ENCODE measurements at regions of chr2 and their contacts with region 1.

Region 1: DNA sequence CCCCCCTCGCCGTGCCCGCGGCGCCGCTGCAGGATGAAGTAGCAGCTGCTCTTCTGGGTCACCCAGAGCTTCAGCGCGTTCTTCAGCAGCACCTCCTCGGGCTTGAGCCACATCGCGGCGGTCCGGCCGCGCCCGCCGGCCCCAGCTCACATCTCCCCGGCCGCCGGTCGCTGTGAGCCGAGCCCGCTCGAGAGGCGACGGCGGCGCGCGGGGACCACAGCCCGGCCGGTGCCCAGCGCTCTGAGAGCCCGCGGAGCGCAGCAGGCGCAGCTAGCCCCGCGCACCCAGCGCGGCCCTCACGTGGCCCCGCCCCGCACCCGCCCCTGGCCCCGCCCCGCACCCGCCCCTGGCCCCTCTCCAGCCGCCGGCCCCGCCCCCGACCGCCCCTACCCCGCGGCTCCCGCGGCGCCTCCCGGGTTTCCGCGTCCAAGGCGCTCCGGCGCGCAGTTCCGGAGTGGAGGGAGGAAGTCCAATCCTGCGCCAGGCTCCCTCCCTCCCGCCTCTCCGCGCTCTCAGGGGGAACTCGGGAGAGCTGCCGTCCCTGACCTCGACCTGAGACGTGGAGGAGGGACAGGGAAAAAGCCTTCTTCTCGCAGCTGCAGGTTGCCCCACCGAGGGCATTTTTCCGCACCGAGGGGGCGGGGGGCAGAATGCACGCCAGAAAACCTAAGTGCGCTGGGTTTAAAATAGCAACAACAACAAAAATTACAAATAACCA is at the start of gene TBC1D8:
- DNase-seq: peak; percentile 52 to 94
- H3K4me3 ChIP-seq: peak within 1 kb of the TSS; percentile 73 to 83
- H3K27ac ChIP-seq: peak within 1 kb of the TSS; percentile 79 to 83
- H3K4me1 ChIP-seq: peaks cover 0 to 15% of the 10 kb centered on the region in 2 donors
- H3K27me3 ChIP-seq: no peaks in the 10 kb centered on the region
- CTCF ChIP-seq: no peak
- total RNA-seq, gene TBC1D8: 17.8 TPM

Region 2: DNA sequence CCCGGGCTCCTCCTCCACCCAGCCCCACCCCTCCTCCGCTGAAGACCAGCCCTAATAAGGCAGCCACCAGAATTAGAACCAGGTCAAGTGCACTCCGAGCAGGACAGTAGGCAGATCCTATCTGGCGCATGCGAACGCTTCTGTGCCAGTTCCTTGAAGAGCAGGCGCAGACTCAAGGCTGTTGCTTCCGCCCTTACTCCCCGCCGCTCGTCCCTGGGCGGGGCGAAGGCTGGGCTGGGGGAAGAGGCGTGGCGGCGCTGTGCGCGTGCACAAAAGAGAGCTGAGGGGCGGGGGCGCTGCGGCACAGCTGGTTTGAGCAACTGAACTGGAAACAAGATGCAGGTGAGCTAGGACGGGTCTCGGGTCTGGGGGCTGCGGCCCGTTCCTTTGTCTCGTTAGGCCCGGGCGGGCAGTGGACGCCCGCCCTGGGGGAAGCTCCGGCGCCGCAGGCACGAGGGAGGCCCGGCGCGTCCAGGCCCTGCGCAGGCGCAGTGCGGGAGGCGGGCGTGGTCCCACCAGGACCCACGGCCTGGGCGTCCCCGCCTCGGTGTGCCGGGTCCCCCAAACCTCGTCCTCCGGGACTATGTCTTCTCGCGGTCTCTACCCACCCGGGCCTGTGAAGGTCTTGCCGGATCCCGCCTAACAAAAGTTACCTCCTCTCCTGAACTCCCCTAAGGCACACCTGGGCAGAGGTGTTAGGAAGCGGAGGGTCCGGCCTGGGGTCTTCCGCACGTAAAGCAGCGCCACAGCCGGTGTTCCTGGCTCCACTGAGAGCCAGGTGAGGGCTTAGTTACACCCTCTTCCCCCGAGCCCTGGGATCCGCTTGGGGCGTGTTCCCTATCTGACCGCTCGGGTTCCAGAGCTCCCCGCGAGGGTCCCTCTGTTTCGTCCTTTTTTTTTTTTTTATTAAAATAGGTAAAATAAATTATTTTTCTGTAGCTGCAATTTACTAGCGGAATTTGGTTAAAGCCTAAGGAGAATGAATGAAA is 588.3 kb before region 1 on chr2 and contains the start of gene PDCL3:
- intact Hi-C with region 1: loop called (anchors 1 kb)
- DNase-seq: peak; percentile 95 to 99
- H3K4me3 ChIP-seq: peak within 1 kb of the TSS; percentile 79 to 84
- H3K27ac ChIP-seq: peak within 1 kb of the TSS; percentile 79 to 85
- H3K4me1 ChIP-seq: peaks cover 0 to 9% of the 10 kb centered on the region in 2 donors
- H3K27me3 ChIP-seq: no peaks in the 10 kb centered on the region
- CTCF ChIP-seq: peak in 1 of 3 experiments; percentile 23
- total RNA-seq, gene PDCL3: 8.1 TPM

Region 3: GRCh38 chr2:100818606-100819369 is 332.5 kb before region 1 on chr2:
- intact Hi-C with region 1: loop called (anchors 5 kb)
- DNase-seq: peak; percentile 30 to 88
- H3K4me3 ChIP-seq: peak overlapping the region; percentile 91 to 95
- H3K27ac ChIP-seq: peak overlapping the region; percentile 95 to 96
- H3K4me1 ChIP-seq: peaks cover 1 to 11% of the 10 kb centered on the region in 2 donors
- H3K27me3 ChIP-seq: no peaks in the 10 kb centered on the region
- CTCF ChIP-seq: peak in 1 of 3 experiments; percentile 17

Region 4: DNA sequence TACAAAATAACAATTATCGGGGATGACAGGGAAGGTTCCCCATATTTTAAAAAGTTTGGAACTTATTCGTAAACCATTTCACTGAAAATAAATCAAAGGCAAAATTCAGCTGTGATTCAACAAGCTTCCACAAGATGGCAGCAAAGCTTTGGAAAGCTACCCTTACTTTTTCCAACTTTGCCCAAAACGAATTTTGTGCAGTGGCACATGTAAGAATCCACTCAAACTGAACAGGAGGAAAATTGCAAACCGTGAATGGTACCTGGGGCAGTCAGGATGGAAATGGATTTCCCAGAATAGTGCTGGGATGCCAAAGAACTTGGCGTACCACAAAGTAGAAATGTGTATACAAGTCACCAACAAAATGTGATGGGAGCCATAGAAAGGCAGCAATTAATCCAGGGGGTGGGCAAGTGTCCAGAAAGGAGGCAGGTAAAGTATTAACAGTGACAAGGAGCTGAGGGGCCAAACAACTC is 138.6 kb before region 1 on chr2:
- intact Hi-C with region 1: loop called (anchors 1 kb)
- DNase-seq: no peak
- H3K4me3 ChIP-seq: no peak overlapping the region
- H3K27ac ChIP-seq: no peak overlapping the region
- H3K4me1 ChIP-seq: no peaks in the 10 kb centered on the region
- H3K27me3 ChIP-seq: no peaks in the 10 kb centered on the region
- CTCF ChIP-seq: peak; percentile 78 to 86 (median 83)

Region 5: DNA sequence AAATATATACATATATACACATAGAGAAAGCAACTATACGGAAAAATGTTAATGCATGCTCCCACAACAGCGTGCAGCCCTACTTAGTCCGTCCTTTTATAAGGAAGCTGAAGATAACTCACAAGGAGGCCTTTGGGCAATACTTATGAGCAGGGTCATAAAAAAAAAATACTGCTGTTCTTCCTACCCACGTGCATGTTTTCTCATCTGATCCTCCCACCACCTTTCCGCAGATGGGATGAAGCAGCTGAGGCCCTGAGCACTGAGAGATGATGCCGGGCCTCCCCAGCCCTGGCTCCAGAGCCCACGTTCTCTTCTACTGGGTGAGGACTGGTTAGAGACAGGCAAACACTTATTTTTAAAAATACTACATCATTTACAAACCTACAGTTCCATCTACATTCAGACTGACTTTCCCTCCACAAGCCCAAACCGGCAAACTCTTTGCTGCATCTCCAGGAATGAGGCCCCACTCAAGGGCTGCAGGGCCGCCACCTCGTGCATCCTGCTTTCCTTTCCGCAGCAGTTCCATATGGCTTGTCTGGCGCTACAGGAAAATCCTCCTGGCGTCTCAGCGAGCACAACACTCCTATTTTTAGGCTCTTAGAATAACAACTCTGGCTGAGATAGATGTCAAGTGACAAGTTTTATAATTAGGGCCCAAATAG is 41.7 kb before region 1 on chr2:
- intact Hi-C with region 1: no loop called
- DNase-seq: no peak
- H3K4me3 ChIP-seq: no peak overlapping the region
- H3K27ac ChIP-seq: peak overlapping the region; percentile 17 to 24
- H3K4me1 ChIP-seq: peaks cover 0 to 13% of the 10 kb centered on the region in 2 donors
- H3K27me3 ChIP-seq: no peaks in the 10 kb centered on the region
- CTCF ChIP-seq: no peak

Region 6: DNA sequence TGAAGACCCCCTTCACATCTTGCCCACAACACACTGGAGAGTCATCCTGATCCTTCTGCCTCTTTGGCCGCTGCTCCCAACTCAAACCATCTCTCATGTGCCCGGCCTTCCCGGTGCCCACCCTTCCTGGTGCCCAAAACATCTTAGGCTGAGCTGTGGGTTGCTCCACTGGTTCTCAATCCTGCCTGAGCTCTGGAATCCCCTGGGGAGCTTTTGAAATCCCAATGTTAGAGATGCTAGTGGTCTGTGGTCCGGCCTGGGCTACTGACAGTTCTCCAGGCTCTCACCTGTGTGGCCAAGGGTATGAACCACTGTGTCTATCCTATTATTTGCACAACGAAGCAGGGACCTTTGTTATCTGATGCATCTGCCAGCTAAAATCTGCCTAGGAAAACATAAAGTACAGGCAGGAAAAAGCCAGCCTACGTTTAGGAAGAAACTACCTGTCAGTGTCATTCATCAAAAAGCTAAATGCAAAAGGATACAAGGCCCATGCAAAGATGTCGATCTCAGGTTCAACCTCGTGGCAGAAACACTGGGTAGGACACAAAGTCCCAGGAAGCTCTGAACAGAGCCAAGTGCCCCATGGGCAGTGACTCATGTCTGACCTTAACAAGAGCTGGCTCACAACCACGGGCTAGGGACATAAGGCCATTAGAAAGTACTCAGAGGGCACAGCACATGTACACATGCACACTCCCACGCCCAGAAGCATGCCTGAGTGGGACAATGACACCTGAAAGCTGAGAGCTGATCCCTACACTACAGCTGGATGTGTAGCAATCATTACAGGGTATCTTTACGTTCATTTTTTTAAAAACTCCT is 30.9 kb before region 1 on chr2:
- intact Hi-C with region 1: loop called (anchors 2 kb)
- DNase-seq: peak; percentile 87 to 95
- H3K4me3 ChIP-seq: no peak overlapping the region
- H3K27ac ChIP-seq: peak overlapping the region; percentile 80 to 84
- H3K4me1 ChIP-seq: peaks cover 8 to 47% of the 10 kb centered on the region in 2 donors
- H3K27me3 ChIP-seq: no peaks in the 10 kb centered on the region
- CTCF ChIP-seq: no peak

Region 7: GRCh38 chr2:101252408-101253012 is 101.2 kb after region 1 on chr2 and contains the start of gene CNOT11:
- intact Hi-C with region 1: loop called (anchors 2 kb)
- DNase-seq: peak; percentile 93 to 99
- H3K4me3 ChIP-seq: peak within 1 kb of the TSS; percentile 83 to 95
- H3K27ac ChIP-seq: peak within 1 kb of the TSS; percentile 90 to 97
- H3K4me1 ChIP-seq: peaks cover 4 to 11% of the 10 kb centered on the region in 2 donors
- H3K27me3 ChIP-seq: no peaks in the 10 kb centered on the region
- CTCF ChIP-seq: peak in 1 of 3 experiments; percentile 25
- total RNA-seq, gene CNOT11: 32.5 TPM